Activated CD4-positive, alpha-beta memory T cell treated with anti-CD3 and anti-CD28 coated beads for 36 hours (primary cell): ENCODE measurements at regions of chrX and their contacts with region 1.

Region 1: GRCh38 chrX:119606280-119607015 is at the start of gene NKRF:
- DNase-seq: peak; percentile 94
- H3K4me3 Mint-ChIP-seq: peak within 1 kb of the TSS; percentile 92
- H3K27ac Mint-ChIP-seq: peak within 1 kb of the TSS; percentile 93
- H3K4me1 Mint-ChIP-seq: peaks cover 35% of the 10 kb centered on the region
- H3K27me3 Mint-ChIP-seq: no peaks in the 10 kb centered on the region
- total RNA-seq, gene NKRF: 19.5 to 20.2 TPM

Region 2: GRCh38 chrX:119516157-119516702 is 90.2 kb before region 1 on chrX:
- CTCF ChIA-PET with region 1: no interaction called
- POLR2A ChIA-PET with region 1: no interaction called
- intact Hi-C with region 1: loop called (anchors 5 kb)
- DNase-seq: peak; percentile 27
- H3K4me3 Mint-ChIP-seq: no peak overlapping the region
- H3K27ac Mint-ChIP-seq: no peak overlapping the region
- H3K4me1 Mint-ChIP-seq: peaks cover 2% of the 10 kb centered on the region
- H3K27me3 Mint-ChIP-seq: no peaks in the 10 kb centered on the region

Region 3: DNA sequence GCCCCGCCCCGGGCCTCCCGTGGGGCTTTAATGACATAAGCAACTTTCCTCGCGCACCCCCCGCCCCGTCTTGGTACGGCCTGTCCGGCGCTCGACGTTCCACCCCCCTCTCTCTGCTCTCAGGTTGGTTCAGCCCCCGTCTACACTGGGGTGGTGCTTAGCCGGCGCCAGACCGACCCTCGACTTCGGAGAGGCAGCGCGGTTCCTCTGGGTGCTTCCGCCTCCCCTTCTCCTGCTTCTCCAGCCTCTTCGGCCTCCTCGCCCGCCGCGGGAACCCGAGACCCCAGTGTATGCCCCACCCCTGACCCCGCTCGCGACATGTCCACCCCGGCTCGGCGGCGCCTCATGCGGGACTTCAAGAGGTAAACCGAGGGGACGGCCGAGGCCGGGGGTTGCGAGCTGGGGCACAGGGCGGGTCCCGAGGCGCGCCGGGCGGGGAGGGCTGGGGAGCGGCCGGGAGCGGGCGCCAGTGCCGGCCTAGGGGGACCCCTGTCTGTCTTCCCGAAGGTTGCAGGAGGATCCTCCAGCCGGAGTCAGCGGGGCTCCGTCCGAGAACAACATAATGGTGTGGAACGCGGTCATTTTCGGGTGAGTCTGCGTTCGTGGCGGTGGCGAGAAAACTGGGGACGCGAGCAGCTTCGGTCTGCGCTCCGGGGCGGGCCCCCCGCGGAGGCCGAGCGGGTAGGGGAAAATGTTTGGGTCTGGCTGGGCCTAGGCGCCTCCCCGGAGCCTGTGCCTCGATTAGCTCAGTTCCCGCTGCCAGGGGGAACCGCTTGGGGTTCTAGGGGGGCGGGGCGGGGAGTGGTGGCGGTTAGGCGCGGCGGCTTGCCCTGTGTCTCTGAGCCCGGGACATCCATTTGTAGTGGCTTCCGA is 31.8 kb before region 1 on chrX and contains the start of gene UBE2A:
- CTCF ChIA-PET with region 1: interaction called, 3 read pairs
- POLR2A ChIA-PET with region 1: interaction called, 3 read pairs
- intact Hi-C with region 1: loop called (anchors 2 kb)
- DNase-seq: peak; percentile 92
- H3K4me3 Mint-ChIP-seq: peak within 1 kb of the TSS; percentile 81
- H3K27ac Mint-ChIP-seq: peak within 1 kb of the TSS; percentile 82
- H3K4me1 Mint-ChIP-seq: peaks cover 25% of the 10 kb centered on the region
- H3K27me3 Mint-ChIP-seq: no peaks in the 10 kb centered on the region
- total RNA-seq, gene UBE2A: 53.9 to 57.4 TPM

Region 4: DNA sequence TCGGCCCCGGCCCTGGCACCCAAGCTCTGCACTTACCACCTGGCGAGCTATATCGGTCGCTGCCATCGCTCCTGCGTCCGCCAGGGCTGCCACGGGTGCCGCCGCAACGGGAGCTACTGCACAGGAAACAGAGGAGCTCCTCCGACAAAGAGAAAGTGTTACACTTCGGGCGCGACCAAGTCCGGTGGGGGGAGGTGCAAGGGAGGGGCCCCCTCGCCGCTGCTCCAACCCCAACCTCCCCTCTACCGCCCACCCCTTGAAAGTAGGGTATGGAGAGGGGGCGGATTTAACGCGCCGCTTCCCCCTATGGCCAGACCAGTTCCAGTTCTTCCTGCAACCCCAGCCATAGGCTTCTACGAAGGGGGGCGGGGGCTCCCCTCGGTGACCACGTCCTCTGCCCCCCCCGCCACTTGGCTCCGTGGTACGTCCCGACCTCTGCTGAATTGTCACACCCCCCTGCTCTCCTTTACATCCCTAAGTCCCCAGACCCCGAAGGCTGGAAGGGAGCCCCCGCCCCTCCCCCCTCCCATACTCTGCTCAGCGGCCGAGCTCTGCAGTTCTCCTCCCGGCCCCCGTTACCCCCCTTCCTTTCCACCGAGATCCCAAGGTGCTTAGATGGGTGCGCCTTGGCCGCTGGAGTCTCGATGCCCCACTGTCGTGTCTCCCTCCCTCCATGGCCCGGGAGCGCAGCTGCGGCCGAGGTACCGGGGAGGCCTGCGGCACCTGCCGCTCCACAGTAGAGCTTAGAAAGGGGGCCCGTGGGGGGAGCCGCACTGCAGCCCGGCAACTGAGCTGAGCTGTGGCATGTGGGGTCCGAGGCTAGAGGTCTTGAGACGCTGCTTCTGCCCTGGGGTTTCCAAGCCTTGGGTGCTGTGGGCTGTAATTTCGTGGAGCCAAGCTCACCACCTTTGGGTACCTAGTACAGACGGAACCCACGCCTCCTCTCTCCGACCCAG is 86.9 kb after region 1 on chrX and contains the start of gene SEPTIN6:
- CTCF ChIA-PET with region 1: interaction called, 3 read pairs
- POLR2A ChIA-PET with region 1: interaction called, 8 read pairs
- intact Hi-C with region 1: loop called (anchors 1 kb)
- DNase-seq: peak; percentile 89
- H3K4me3 Mint-ChIP-seq: peak within 1 kb of the TSS; percentile 88
- H3K27ac Mint-ChIP-seq: peak within 1 kb of the TSS; percentile 99
- H3K4me1 Mint-ChIP-seq: peaks cover 6% of the 10 kb centered on the region
- H3K27me3 Mint-ChIP-seq: no peaks in the 10 kb centered on the region
- total RNA-seq, gene SEPTIN6: 154 to 156 TPM

Region 5: GRCh38 chrX:119753571-119754257 is 147.3 kb after region 1 on chrX:
- CTCF ChIA-PET with region 1: interaction called, 7 read pairs
- POLR2A ChIA-PET with region 1: interaction called, 7 read pairs
- intact Hi-C with region 1: loop called (anchors 2 kb)
- DNase-seq: peak; percentile 54
- H3K4me3 Mint-ChIP-seq: peak overlapping the region; percentile 16
- H3K27ac Mint-ChIP-seq: peak overlapping the region; percentile 90
- H3K4me1 Mint-ChIP-seq: peaks cover 40% of the 10 kb centered on the region
- H3K27me3 Mint-ChIP-seq: no peaks in the 10 kb centered on the region

Region 6: GRCh38 chrX:119943185-119943988 is 336.9 kb after region 1 on chrX and contains the start of gene NKAP:
- CTCF ChIA-PET with region 1: no interaction called
- POLR2A ChIA-PET with region 1: no interaction called
- intact Hi-C with region 1: no loop called
- DNase-seq: peak; percentile 89
- H3K4me3 Mint-ChIP-seq: peak within 1 kb of the TSS; percentile 89
- H3K27ac Mint-ChIP-seq: peak within 1 kb of the TSS; percentile 93
- H3K4me1 Mint-ChIP-seq: peaks cover 15% of the 10 kb centered on the region
- H3K27me3 Mint-ChIP-seq: no peaks in the 10 kb centered on the region
- total RNA-seq, gene NKAP: 10.8 to 11.7 TPM